ENCODE measurements at regions of chr6 and their contacts with region 1.

Region 1: GRCh38 chr6:28496099-28496779 is 19.4 kb downstream of the GPX6 start:
- DNase-seq: no peak
- H3K4me3 ChIP-seq: no peak overlapping the region
- H3K27ac ChIP-seq: no peak overlapping the region
- H3K4me1 ChIP-seq: no peaks in the 10 kb centered on the region
- H3K27me3 ChIP-seq: peaks cover 2 to 7% of the 10 kb centered on the region in 2 experiments
- CTCF ChIP-seq: no peak
- POLR2A ChIP-seq: no peak

Region 2: DNA sequence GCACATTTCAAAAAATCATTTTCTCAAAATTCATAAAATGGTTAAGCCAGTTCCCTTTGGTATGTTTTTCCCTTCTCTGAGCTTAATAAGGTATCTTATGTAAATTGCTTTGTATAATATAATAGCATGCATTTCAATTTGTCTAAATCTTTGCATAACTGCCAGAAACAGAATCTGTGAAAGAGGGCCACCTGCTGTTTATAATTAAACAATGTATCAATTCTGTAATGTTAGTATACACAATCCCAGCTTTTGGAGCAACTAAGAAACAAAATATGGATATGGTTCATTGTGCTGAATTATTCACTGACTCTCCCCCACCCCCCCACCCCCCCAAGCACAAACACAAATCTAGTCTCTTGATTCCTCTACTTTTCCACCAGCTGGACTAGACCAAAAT is 84.2 kb after region 1 on chr6:
- CTCF ChIA-PET with region 1: interaction called, 15 read pairs
- POLR2A ChIA-PET with region 1: no interaction called
- dilution Hi-C with region 1: no loop called
- intact Hi-C with region 1: loop called (anchors 1 kb)
- DNase-seq: no peak
- H3K4me3 ChIP-seq: no peak overlapping the region
- H3K27ac ChIP-seq: no peak overlapping the region
- H3K4me1 ChIP-seq: no peaks in the 10 kb centered on the region
- H3K27me3 ChIP-seq: peaks cover 0 to 5% of the 10 kb centered on the region in 2 experiments
- CTCF ChIP-seq: no peak
- POLR2A ChIP-seq: no peak

Measured in endothelial cell of umbilical vein (primary cell).